Activated naive CD4-positive, alpha-beta T cell treated with anti-CD3 and anti-CD28 coated beads for 36 hours (primary cell): ENCODE measurements at regions of chr4 and their contacts with region 1.

Region 1: GRCh38 chr4:152535903-152536544 is at the start of gene FBXW7:
- DNase-seq: peak; percentile 100
- H3K4me3 Mint-ChIP-seq: peak within 1 kb of the TSS; percentile 87
- H3K27ac Mint-ChIP-seq: peak within 1 kb of the TSS; percentile 97
- H3K4me1 Mint-ChIP-seq: peaks cover 56% of the 10 kb centered on the region
- H3K27me3 Mint-ChIP-seq: no peaks in the 10 kb centered on the region
- total RNA-seq, gene FBXW7: 26.7 to 29.2 TPM

Region 2: DNA sequence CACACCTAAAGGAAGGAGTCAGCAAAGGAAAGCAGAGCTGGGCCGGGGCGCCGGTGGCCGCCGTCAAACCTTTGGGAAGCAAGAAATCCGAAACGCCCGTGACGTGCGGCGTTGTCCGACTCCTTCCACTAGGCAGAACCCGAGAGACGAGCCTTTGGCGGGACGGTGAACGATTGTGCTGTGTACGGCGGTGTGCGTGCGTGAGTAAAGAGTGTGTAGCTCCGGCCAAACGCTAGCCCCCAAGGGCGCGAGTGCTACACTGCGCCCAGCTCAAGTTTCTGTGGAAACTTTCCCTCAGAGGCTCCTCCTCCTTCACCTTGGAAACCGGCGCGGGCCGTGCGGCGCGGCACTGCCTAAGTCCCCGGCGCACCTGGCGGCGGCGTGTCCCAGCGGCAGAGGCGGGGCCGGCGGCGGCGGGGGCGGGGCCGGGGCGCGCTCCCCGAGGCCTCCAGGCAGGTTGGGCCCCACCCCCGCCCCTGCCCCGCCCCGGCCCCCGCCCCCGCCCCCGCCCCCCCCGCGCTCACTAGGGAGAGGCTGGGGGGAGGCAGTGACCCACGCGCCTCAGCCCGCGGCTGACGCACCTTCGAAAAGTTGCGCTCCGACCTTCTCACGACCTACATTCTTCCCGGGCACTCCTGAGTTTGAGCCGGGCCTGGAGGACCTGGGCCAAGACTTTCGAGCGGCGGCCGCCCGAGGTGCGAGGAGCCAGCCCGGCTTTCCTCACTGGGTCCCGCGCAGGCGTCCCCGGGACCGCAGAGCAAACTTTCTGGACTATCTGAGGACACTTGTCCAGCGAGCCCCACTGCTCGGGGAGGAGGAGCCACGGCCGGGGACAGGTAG is 1127.2 kb before region 1 on chr4 and contains the start of gene FHIP1A:
- CTCF ChIA-PET with region 1: no interaction called
- intact Hi-C with region 1: loop called (anchors 5 kb)
- DNase-seq: peak; percentile 89
- H3K4me3 Mint-ChIP-seq: peak within 1 kb of the TSS; percentile 88
- H3K27ac Mint-ChIP-seq: peak within 1 kb of the TSS; percentile 60
- H3K4me1 Mint-ChIP-seq: peaks cover 22% of the 10 kb centered on the region
- H3K27me3 Mint-ChIP-seq: peaks cover 17% of the 10 kb centered on the region
- total RNA-seq, gene FHIP1A: 0.07 to 0.17 TPM

Region 3: DNA sequence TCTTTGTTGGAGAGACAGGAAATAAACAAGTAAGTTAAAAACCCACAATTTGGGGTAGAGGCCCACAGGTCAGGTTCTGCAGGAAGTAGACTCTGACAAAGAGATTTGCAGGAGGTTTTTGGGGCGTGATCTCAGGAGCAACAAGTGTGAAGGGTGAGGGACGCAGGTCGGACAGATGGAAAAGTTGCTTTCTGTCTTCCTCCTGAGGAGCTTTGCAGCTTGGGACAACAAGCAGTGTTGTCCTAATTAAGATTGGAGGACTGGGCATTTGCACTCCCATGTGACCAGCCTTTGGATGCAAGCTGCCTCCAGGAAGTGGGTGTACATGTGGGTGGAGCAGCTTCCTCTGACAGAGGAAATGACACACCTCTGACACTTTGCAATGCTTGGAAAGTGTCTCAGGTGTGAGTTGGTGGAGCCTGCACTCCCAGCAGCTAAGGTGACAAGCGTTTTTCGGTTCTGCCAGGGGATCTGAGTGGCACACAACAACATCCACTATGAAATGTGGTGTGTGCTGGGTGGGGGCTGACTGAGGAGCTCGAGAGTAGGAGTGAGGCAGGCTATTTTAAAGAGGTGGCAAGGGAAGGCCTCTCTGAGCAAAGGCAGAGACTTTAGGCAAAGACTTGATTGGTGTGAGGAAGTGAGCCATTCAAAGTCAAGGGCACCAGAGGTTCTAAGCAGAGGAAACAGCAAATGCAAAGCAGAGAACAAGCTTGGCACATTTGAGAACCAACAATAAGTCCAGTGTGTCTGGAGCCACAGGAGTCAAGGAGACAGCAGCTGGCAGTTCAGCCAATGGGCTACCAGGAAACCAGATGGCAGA is 435.4 kb before region 1 on chr4:
- CTCF ChIA-PET with region 1: no interaction called
- intact Hi-C with region 1: loop called (anchors 5 kb)
- DNase-seq: peak; percentile 92
- H3K4me3 Mint-ChIP-seq: peak overlapping the region; percentile 71
- H3K27ac Mint-ChIP-seq: peak overlapping the region; percentile 98
- H3K4me1 Mint-ChIP-seq: peaks cover 88% of the 10 kb centered on the region
- H3K27me3 Mint-ChIP-seq: no peaks in the 10 kb centered on the region

Region 4: GRCh38 chr4:152471251-152471792 is 64.7 kb before region 1 on chr4:
- CTCF ChIA-PET with region 1: no interaction called
- intact Hi-C with region 1: no loop called
- DNase-seq: no peak
- H3K4me3 Mint-ChIP-seq: no peak overlapping the region
- H3K27ac Mint-ChIP-seq: no peak overlapping the region
- H3K4me1 Mint-ChIP-seq: peaks cover 15% of the 10 kb centered on the region
- H3K27me3 Mint-ChIP-seq: no peaks in the 10 kb centered on the region

Region 5: GRCh38 chr4:152485726-152486276 is 50.2 kb before region 1 on chr4:
- CTCF ChIA-PET with region 1: no interaction called
- intact Hi-C with region 1: loop called (anchors 1 kb)
- DNase-seq: peak; percentile 49
- H3K4me3 Mint-ChIP-seq: no peak overlapping the region
- H3K27ac Mint-ChIP-seq: no peak overlapping the region
- H3K4me1 Mint-ChIP-seq: peaks cover 40% of the 10 kb centered on the region
- H3K27me3 Mint-ChIP-seq: no peaks in the 10 kb centered on the region

Region 6: DNA sequence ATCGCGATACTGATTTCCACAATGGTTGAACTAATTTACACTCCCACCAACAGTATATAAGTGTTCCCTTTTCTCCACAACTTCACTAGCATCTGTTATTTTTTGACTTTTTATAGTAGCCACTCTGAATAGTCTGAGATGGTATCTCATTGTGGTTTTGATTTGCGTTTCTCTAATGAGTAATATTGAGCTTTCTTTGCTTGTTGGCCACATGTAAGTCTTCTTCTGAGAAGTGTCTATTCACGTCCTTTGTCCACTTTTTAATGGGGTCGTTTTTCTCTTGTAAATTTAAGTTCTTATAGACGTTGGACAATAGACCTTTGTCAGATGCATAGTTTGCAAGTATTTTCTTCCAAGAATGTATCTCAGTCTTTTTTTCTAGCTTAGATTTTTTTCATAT is 10.2 kb before region 1 on chr4:
- CTCF ChIA-PET with region 1: interaction called, 3 read pairs
- intact Hi-C with region 1: loop called (anchors 1 kb)
- DNase-seq: no peak
- H3K4me3 Mint-ChIP-seq: no peak overlapping the region
- H3K27ac Mint-ChIP-seq: no peak overlapping the region
- H3K4me1 Mint-ChIP-seq: peaks cover 59% of the 10 kb centered on the region
- H3K27me3 Mint-ChIP-seq: no peaks in the 10 kb centered on the region

Region 7: DNA sequence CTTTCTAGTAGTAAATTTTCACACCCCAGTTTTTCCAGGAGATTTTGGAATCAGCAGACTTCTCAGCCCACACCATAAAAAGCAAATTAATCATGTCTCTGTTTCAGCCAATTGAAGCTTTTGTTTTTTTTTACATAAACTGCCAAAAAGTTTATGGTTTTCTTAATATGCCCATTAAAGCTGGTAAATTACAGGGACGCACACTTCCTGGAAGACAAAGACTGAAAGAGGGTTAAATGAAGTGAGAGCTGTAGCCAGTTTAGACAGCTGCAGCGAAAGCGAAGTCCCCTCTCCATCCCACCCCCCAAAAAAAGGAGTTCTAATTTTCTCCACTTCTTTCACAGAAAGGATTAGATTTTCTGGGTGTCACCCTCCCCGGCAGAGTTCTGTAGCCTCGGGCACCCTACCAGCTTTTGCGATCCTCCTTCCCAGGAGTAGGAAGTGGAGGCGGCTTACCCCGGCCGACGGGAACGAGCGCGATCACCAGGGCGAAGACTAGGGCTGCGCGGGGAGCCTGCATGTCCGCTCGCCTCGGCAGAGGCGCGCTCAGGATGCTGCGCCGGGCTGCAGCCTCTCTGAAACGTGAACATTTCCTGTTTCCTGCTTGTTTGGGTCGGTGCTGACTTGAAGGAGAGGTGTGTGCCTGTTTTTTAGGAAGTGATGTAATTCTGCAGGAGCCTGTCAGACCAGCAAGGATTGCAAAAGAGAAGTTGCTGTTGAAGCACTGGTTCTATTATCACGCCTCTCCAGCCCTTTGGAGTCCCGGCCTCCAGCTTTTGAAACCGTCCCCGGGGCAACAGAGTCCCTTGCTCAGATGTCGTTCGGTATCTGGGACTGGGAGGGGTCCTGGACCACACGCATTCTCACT is 143.6 kb after region 1 on chr4 and contains the start of gene TMEM154:
- CTCF ChIA-PET with region 1: interaction called, 3 read pairs
- intact Hi-C with region 1: loop called (anchors 1 kb)
- DNase-seq: peak; percentile 83
- H3K4me3 Mint-ChIP-seq: peak within 1 kb of the TSS; percentile 87
- H3K27ac Mint-ChIP-seq: peak within 1 kb of the TSS; percentile 85
- H3K4me1 Mint-ChIP-seq: peaks cover 59% of the 10 kb centered on the region
- H3K27me3 Mint-ChIP-seq: no peaks in the 10 kb centered on the region
- total RNA-seq, gene TMEM154: 17.3 to 20.4 TPM

Region 8: GRCh38 chr4:153153339-153153871 is 617.4 kb after region 1 on chr4:
- CTCF ChIA-PET with region 1: no interaction called
- intact Hi-C with region 1: loop called (anchors 1 kb)
- DNase-seq: peak; percentile 91
- H3K4me3 Mint-ChIP-seq: peak overlapping the region; percentile 80
- H3K27ac Mint-ChIP-seq: peak overlapping the region; percentile 86
- H3K4me1 Mint-ChIP-seq: peaks cover 58% of the 10 kb centered on the region
- H3K27me3 Mint-ChIP-seq: no peaks in the 10 kb centered on the region